G401 (cell line): ENCODE measurements at regions of chr6 and their contacts with region 1.

Region 1: GRCh38 chr6:146913842-146914488 is 290.3 kb upstream of the STXBP5 start:
- DNase-seq: peak; percentile 78

Region 2: DNA sequence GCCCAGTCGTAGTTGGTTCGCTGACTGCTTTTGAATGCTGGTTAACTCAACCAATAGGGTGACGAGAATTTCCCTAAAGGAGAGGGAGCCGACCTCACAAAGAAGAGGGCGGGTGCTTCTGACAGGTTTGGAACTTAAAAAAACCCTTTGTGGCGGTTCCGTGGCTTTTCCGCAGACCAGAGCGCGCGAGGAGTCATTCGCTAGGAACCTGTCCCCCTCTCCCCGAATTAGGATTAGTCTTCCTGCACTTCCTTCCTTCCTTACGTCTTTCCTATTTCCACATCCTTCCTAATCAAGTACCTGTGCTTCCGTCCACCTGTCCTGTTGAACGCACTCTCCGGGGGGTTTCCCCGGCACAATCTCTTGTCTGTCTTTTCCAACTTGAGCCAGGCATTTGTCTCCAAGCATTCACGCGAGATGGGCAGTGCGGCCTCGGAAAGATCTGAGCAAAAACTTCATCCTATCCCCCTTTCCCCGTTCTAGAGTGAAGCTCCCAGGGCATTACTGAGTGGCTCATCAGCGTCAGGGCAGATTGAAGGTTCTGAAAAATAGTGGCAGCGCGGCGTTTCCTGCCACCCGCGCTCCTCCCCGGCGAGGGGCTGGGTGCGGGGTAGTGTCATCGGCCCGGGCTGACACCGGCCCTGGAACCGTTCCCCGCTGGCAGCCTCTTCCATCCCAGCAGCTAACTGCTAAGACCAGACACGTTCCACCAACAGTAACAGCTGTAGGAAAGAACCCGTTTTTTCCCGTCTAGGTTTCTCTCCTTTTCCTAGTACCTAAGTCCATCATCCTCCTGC is 288.7 kb after region 1 on chr6:
- in situ Hi-C with region 1: loop called (anchors 25 kb)
- DNase-seq: peak; percentile 99